ENCODE measurements at regions of chr10 and their contacts with region 1.

Region 1: GRCh38 chr10:70363971-70364771 is 18.3 kb downstream of the LRRC20 start:
- DNase-seq: peak; percentile 93 to 96 (median 94)
- H3K4me3 ChIP-seq: peak overlapping the region; percentile 25
- H3K27ac ChIP-seq: peak overlapping the region; percentile 74 to 87
- H3K4me1 ChIP-seq: peaks cover 8% of the 10 kb centered on the region
- H3K27me3 ChIP-seq: no peaks in the 10 kb centered on the region
- CTCF ChIP-seq: peak; percentile 94 to 96 (median 94)
- EP300 ChIP-seq: no peak
- POLR2A ChIP-seq: peak; percentile 34

Region 2: DNA sequence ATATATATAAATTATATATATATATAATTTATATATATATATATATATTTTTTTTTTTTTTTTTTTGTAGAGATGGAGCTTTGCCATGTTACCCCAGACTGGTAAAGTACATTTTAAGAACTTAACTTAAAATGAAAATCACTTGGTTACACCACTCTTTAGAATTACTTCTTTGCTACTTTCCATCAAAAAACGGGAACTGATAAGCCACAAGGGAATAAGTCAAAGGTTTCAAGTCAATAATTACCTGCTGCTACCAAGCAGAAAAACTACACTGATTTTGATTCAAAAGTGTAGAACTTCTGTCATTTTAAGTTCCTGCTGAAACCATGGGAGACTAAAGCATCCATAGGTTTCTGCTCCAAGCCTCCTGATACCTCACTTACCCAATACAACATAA is 143.1 kb before region 1 on chr10:
- intact Hi-C with region 1: loop called (anchors 2 to 5 kb)
- DNase-seq: no peak
- H3K4me3 ChIP-seq: no peak overlapping the region
- H3K27ac ChIP-seq: peak overlapping the region in 1 of 2 donors; percentile 15
- H3K4me1 ChIP-seq: no peaks in the 10 kb centered on the region
- H3K27me3 ChIP-seq: no peaks in the 10 kb centered on the region
- CTCF ChIP-seq: no peak
- EP300 ChIP-seq: no peak
- POLR2A ChIP-seq: no peak

Region 3: GRCh38 chr10:70283445-70284399 is 80.4 kb before region 1 on chr10 and contains the start of gene NPFFR1:
- intact Hi-C with region 1: loop called in 1 of 4 experiments (anchors 10 kb)
- DNase-seq: peak in 1 of 5 donors; percentile 31
- H3K4me3 ChIP-seq: no peak within 1 kb of the TSS
- H3K27ac ChIP-seq: no peak within 1 kb of the TSS
- H3K4me1 ChIP-seq: peaks cover 2% of the 10 kb centered on the region
- H3K27me3 ChIP-seq: no peaks in the 10 kb centered on the region
- CTCF ChIP-seq: no peak
- EP300 ChIP-seq: no peak
- POLR2A ChIP-seq: no peak
- total RNA-seq, gene NPFFR1: 0.15 to 1.1 (median 0.24) TPM

Measured in ovary (tissue), 10 donors.